ENCODE measurements at regions of chr1 and their contacts with region 1.

Region 1: DNA sequence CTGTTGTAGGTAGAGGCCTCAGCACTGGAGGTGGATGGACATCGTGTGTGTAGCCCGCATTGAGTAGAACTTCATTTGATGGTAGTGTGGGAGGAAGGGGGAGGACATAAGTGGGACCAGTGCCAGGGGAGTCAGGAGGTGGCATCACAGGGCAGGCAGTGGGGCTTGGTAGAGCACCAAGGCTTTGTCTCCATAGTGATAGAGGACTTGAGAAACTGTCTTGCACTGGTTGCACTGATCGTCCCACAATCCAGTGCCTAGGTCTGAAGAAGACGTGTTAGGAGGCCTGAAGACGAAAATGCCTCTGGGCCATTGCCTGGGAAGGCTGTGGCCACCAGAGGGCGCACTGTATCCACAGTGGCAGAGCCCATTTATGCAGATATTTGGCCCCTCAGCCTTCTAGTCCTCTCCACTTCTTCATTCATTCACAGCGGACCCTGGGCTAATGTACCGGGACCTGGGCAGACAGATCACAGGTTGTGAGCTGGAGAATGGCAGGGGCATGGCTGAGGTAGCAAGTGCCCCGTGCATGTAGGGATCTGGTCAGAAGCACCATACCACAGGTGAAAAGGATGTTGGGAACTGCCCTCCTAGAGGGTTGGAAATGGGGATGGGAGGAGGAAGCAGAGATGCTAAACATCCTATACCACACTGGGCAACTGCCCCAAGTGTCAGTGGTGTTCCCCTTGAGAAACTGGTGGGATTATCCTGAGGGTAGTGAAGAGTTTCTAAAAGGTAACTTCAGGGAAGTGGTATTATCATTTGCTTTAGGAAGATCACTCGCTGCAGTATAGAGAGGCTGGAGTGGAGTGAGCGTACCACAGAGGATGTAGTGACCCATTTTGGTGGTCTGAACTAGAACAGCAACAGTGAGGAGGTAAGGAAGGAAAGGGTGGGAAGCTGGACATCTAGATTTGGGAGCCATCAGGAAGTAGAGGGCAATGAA is 95.3 kb downstream of the PIK3R3 start:
- DNase-seq: peak; percentile 87

Region 2: DNA sequence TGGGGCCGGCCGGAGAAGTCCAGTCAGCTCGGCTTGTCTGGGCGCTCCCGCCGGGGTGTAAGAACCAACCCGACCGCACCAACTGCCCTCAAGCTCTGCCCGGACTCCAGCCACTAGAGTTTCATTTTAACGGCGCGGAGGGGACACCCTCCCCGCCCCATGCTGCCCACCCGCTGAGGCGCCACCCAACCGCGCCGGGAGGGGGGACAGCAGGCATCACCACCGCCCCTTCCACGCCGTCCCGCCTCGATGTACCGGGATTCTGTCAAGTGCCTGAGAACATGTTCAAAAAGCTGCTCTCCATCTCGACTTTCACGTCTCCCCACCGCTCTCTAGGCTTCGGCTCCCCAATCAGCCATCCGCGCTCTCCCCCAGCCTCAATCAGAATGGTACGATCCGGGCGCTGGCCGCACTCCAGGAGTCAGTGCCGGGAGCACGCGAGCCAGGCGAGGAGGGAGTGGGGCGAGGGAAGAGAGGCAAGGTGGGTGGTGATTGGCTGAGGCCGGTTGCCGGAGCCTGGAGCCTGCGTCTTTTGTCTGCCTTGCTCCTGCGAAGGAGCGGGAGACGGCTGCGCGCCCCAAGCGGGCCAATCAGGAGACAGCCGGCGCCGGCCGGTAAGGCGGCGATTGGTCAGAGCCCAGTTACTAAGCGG is 95.5 kb after region 1 on chr1 and contains the start of gene PIK3R3:
- CTCF ChIA-PET with region 1: interaction called, 3 read pairs
- POLR2A ChIA-PET with region 1: interaction called, 20 read pairs
- DNase-seq: peak; percentile 95

Region 3: GRCh38 chr1:46183088-46183842 is 146.1 kb after region 1 on chr1:
- CTCF ChIA-PET with region 1: interaction called, 14 read pairs
- POLR2A ChIA-PET with region 1: no interaction called
- DNase-seq: no peak

Region 4: GRCh38 chr1:46223472-46223943 is 186.3 kb after region 1 on chr1:
- CTCF ChIA-PET with region 1: interaction called, 13 read pairs
- POLR2A ChIA-PET with region 1: interaction called, 3 read pairs
- DNase-seq: peak; percentile 71

Measured in HEK293T (cell line).